ENCODE measurements at regions of chr17 and their contacts with region 1.

Region 1: GRCh38 chr17:29444589-29444988 is 54.4 kb downstream of the TAOK1 start:
- DNase-seq: no peak
- ATAC-seq: peak; percentile 67
- H3K4me3 ChIP-seq: no peak overlapping the region
- H3K27ac ChIP-seq: no peak overlapping the region
- H3K4me1 ChIP-seq: no peaks in the 10 kb centered on the region
- H3K27me3 ChIP-seq: no peaks in the 10 kb centered on the region

Region 2: DNA sequence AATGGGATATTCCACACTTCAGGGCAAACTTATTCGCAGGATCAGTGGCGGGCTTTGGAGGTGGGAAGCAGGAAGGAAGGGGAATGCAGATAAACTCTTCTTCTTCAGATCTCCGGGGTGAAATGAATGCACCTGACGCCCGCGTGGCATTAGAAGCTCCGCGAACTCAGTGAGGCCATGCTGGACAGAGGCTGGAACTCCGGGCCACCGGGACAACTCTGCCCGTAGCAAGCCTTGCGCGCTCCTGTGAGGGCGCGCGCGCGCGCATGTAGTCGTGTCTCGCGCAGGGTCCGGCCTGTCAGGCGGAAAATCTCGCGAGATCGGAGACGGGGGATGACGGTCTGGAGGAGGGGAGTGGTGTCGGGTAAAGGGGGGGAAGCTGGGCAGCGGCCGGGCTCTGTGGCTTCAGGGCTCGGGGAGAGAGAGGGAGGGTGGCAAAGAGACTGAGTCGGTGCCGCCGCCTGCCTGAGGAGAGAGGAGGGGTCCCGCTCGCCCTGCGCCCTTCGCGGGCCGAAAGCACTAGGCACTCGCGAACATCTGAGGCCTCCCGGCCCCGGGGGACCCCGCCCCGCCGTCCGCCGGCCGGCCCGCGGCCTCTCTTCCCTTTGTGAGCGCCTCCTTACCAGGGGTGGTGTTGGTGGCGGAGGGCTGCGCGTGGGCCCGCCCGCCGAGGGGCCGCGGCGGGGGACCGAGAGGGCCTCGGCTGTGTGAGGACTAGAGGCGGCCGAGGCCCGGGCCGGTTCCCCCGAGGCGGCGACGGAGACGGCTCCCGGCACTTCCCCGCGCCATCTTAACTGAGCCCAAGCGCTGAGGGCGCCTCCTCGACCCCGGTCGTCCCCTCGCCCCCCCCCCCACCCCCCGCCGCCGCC is 54.4 kb before region 1 on chr17 and contains the start of gene TAOK1:
- intact Hi-C with region 1: loop called in 1 of 2 experiments (anchors 10 kb)
- DNase-seq: peak; percentile 100
- ATAC-seq: peak; percentile 100
- H3K4me3 ChIP-seq: peak within 1 kb of the TSS; percentile 93 to 97
- H3K27ac ChIP-seq: peak within 1 kb of the TSS in 1 of 2 donors; percentile 58
- H3K4me1 ChIP-seq: no peaks in the 10 kb centered on the region
- H3K27me3 ChIP-seq: no peaks in the 10 kb centered on the region
- total RNA-seq, gene TAOK1: 78.8 to 85.6 TPM